Kidney (tissue), 22 donors: ENCODE measurements at regions of chr16 and their contacts with region 1.

Region 1: GRCh38 chr16:57757326-57757786 is 21.8 kb downstream of the KATNB1 start:
- DNase-seq: peak; percentile 60 to 94 (median 80)
- H3K4me3 ChIP-seq: no peak overlapping the region
- H3K27ac ChIP-seq: peak overlapping the region in 1 of 2 donors; percentile 49
- H3K4me1 ChIP-seq: peaks cover 0 to 3% (median 0%) of the 10 kb centered on the region in 3 donors
- H3K27me3 ChIP-seq: no peaks in the 10 kb centered on the region
- CTCF ChIP-seq: peak; percentile 95

Region 2: DNA sequence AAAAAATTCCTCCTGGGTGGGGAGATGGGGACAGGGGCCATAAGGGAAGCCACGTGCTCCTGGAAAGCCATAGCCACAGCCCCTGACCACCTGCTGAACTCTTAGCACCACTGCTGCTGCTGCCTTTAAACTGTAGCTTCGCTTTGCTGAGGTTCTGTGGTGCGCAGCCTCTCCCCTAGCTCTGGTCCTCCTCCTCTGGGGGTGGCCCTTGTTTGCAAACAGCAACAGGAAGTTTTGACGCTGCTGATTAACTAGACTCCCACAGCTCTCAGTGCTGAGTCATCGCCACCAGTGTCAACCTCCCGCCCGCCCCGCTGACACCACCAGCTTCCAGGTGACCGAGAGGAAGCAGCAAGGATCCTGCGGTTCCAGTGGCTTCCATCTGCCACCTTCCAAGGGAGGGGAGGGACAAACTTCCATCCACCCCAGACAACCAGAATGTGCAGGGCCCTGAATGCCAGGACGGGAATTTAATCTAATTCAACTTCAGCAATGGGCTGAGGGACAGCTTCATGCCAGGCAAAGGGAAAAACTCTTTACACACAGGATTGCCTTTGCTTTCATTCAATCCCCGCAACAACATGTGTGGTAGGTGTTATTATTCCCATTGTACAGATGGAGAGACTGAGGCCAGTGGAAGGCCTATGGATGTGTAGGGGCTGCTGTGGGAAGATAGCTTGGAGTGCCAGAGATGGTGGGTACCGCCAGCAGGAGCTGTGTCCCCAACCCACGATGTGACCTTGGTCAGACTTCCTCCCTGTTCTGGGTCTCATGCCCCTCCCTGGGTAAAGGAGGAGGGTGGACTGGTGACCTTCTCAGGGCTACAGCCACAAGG is 53.1 kb after region 1 on chr16:
- intact Hi-C with region 1: no loop called
- DNase-seq: peak; percentile 60 to 95 (median 73)
- H3K4me3 ChIP-seq: peak overlapping the region in 1 of 3 donors; percentile 18
- H3K27ac ChIP-seq: peak overlapping the region; percentile 47 to 95
- H3K4me1 ChIP-seq: peaks cover 0 to 30% (median 28%) of the 10 kb centered on the region in 3 donors
- H3K27me3 ChIP-seq: no peaks in the 10 kb centered on the region
- CTCF ChIP-seq: peak; percentile 1

Region 3: GRCh38 chr16:57867000-57867561 is 109.7 kb after region 1 on chr16:
- intact Hi-C with region 1: loop called (anchors 5 kb)
- DNase-seq: peak in 4 of 5 donors; percentile 68 to 93 (median 84)
- H3K4me3 ChIP-seq: no peak overlapping the region
- H3K27ac ChIP-seq: no peak overlapping the region
- H3K4me1 ChIP-seq: peaks cover 0 to 5% (median 2%) of the 10 kb centered on the region in 3 donors
- H3K27me3 ChIP-seq: no peaks in the 10 kb centered on the region
- CTCF ChIP-seq: no peak